Naive thymus-derived CD4-positive, alpha-beta T cell (primary cell): ENCODE measurements at regions of chr16 and their contacts with region 1.

Region 1: DNA sequence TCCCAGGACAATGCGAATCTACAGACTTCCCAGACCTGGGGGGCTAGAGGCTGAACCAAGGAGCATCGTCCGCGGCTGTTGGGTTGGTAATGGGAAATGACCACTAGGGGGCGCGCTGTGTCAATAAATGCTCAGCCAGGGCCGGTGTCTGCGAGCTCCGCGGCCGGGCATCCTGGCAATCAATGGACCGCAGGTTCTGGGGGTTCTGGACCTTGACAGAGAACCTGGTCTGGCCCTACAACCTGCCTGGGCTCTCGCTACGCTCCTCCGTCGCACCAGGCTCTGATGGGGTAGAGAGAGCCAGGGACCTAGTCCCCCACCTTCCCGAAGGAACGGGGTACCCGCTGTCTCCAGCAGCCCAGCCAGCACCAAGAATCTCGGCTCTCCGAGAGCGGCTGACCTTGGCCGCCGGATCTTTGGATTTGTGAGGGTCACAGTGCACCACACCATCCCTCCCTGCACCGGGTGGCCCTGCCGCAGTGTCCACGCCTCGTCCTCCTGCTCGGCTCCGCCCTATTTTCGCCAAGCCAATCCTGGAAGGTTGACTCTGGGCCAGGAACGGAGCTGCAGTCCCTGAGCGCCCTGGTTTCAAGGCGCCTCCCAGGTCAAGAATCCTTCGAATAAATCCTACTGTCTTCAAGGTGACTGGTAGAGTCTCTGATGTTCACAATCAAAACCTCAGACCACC is 20.4 kb upstream of the BEAN1 start:
- DNase-seq: peak; percentile 70 to 92 (median 84)
- ATAC-seq: peak; percentile 90
- H3K4me3 ChIP-seq: peak overlapping the region; percentile 76
- H3K4me3 Mint-ChIP-seq: peak overlapping the region; percentile 86 to 94 (median 89)
- H3K27ac ChIP-seq: no peak overlapping the region
- H3K27ac Mint-ChIP-seq: peak overlapping the region; percentile 34 to 97 (median 79)
- H3K4me1 ChIP-seq: peaks cover 19 to 27% of the 10 kb centered on the region in 2 donors
- H3K4me1 Mint-ChIP-seq: peaks cover 14 to 40% (median 33%) of the 10 kb centered on the region in 7 donors
- H3K27me3 ChIP-seq: no peaks in the 10 kb centered on the region
- H3K27me3 Mint-ChIP-seq: peaks cover 0 to 24% (median 5%) of the 10 kb centered on the region in 5 donors

Region 2: GRCh38 chr16:66212428-66212827 is 194.2 kb before region 1 on chr16:
- CTCF ChIA-PET with region 1: no interaction called
- POLR2A ChIA-PET with region 1: no interaction called
- intact Hi-C with region 1: no loop called
- DNase-seq: no peak
- ATAC-seq: no peak
- H3K4me3 ChIP-seq: no peak overlapping the region
- H3K4me3 Mint-ChIP-seq: no peak overlapping the region
- H3K27ac ChIP-seq: no peak overlapping the region
- H3K27ac Mint-ChIP-seq: no peak overlapping the region
- H3K4me1 ChIP-seq: no peaks in the 10 kb centered on the region
- H3K4me1 Mint-ChIP-seq: peaks cover 0 to 2% (median 0%) of the 10 kb centered on the region in 7 donors
- H3K27me3 ChIP-seq: no peaks in the 10 kb centered on the region
- H3K27me3 Mint-ChIP-seq: peaks cover 8 to 22% (median 18%) of the 10 kb centered on the region in 5 donors

Region 3: DNA sequence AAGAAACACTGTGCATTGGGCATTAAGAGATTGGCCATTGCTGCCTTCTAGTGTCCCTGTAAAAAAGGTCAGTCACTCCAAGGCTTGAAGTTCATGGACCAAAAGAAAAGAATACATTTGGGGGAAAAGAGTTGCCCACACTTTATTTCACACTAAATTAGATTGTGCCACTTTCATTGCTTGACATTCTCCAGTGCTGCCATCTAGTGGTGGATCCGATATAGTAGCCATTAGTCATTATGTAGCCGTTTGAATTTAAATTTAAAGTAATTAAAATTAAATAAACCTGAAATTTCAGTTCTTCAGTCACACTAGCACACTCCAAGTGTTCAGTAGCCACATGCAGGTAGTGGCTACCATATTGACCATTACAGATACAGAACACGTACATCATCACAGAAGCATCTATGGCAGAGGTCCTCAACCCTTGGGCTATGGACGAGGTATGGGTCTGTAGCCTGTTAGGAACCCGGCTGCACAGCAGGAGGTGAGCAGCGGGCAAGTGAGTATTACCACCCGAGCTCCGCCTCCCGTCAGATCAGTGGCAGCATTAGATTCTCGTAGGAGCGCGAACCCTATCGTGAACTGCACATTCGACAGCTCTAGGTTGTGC is 62.0 kb before region 1 on chr16:
- CTCF ChIA-PET with region 1: no interaction called
- POLR2A ChIA-PET with region 1: no interaction called
- intact Hi-C with region 1: no loop called
- DNase-seq: peak in 4 of 9 donors; percentile 20 to 40 (median 27)
- ATAC-seq: peak; percentile 36
- H3K4me3 ChIP-seq: no peak overlapping the region
- H3K4me3 Mint-ChIP-seq: no peak overlapping the region
- H3K27ac ChIP-seq: no peak overlapping the region
- H3K27ac Mint-ChIP-seq: no peak overlapping the region
- H3K4me1 ChIP-seq: no peaks in the 10 kb centered on the region
- H3K4me1 Mint-ChIP-seq: no peaks in the 10 kb centered on the region
- H3K27me3 ChIP-seq: no peaks in the 10 kb centered on the region
- H3K27me3 Mint-ChIP-seq: peaks cover 12 to 51% (median 29%) of the 10 kb centered on the region in 5 donors

Region 4: DNA sequence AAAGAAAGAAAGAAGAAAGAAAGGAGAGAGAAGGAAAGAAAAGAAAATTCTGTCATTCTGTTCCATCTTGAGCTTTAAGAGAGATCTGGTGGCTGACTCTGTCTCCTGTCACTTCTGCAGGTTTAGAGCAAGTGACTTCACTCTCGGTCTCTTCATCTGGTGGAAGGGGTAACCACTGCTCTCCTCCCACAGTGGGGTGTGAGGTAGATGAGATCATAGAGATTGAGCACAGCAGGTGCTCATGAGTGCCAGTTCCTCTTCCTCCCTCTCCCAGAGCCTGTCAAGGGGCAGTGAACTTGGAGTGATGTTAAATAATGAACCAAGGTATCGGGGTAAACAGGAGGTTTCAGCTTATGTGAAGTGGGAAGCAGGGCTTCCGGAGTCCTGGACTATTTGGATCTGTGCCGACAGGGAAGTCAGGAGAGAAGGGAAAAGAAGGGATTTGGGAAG is 68.1 kb after region 1 on chr16:
- CTCF ChIA-PET with region 1: interaction called, 84 read pairs
- POLR2A ChIA-PET with region 1: interaction called, 8 read pairs
- intact Hi-C with region 1: loop called (anchors 1 kb)
- DNase-seq: peak in 8 of 9 donors; percentile 49 to 76 (median 65)
- ATAC-seq: peak; percentile 85
- H3K4me3 ChIP-seq: no peak overlapping the region
- H3K4me3 Mint-ChIP-seq: peak overlapping the region in 9 of 10 donors; percentile 7 to 55 (median 36)
- H3K27ac ChIP-seq: peak overlapping the region; percentile 47
- H3K27ac Mint-ChIP-seq: peak overlapping the region; percentile 71 to 94 (median 86)
- H3K4me1 ChIP-seq: peaks cover 21 to 28% of the 10 kb centered on the region in 2 donors
- H3K4me1 Mint-ChIP-seq: peaks cover 13 to 35% (median 32%) of the 10 kb centered on the region in 7 donors
- H3K27me3 ChIP-seq: no peaks in the 10 kb centered on the region
- H3K27me3 Mint-ChIP-seq: peaks cover 0 to 5% (median 0%) of the 10 kb centered on the region in 5 donors

Region 5: DNA sequence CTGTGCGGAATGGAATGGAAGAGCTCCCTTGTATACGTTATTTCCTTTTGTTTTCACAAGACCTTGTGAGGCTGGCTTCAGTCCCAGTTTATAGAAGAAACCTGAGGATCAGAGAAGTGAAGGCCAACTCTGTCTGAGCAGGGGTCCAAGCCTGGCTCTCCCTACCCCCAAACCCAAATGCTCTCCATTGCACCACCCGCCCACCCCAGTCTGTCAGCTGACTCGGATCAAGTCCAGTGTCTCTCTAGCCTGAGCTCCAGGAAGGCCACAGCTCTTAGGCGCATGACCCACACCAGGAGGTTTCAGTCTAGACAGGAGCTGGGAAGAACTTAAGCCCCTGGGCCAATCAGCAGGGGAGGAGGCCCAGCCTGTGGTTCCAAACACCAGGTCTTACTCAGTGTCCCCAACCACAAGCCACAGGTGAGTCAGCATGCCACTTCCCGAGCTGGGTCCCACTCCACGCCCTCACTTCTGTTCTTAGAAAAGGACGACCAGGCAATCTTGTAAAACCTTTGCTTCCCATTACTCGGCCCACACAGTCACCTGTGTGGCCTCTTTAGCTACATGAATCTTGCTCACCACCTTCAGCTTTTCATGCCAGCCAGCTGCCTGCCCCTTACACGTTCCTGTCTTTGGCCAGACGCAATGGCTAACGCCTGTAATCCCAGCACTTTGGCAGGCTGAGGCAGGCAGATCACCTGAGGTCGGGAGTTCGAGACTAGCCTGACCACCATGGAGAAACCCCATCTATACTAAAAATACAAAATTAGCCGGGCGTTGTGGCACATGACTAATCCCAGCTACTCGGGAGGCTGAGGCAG is 115.5 kb after region 1 on chr16:
- CTCF ChIA-PET with region 1: no interaction called
- POLR2A ChIA-PET with region 1: interaction called, 3 read pairs
- intact Hi-C with region 1: loop called in 1 of 2 experiments (anchors 1 kb)
- DNase-seq: peak in 8 of 9 donors; percentile 26 to 92 (median 42)
- ATAC-seq: peak; percentile 65
- H3K4me3 ChIP-seq: peak overlapping the region; percentile 39
- H3K4me3 Mint-ChIP-seq: peak overlapping the region; percentile 71 to 85 (median 80)
- H3K27ac ChIP-seq: no peak overlapping the region
- H3K27ac Mint-ChIP-seq: peak overlapping the region; percentile 79 to 96 (median 91)
- H3K4me1 ChIP-seq: peaks cover 73 to 74% of the 10 kb centered on the region in 2 donors
- H3K4me1 Mint-ChIP-seq: peaks cover 69 to 97% (median 85%) of the 10 kb centered on the region in 7 donors
- H3K27me3 ChIP-seq: no peaks in the 10 kb centered on the region
- H3K27me3 Mint-ChIP-seq: peaks cover 0 to 4% (median 0%) of the 10 kb centered on the region in 5 donors

Region 6: GRCh38 chr16:66588981-66589713 is 182.5 kb after region 1 on chr16:
- CTCF ChIA-PET with region 1: interaction called, 28 read pairs
- POLR2A ChIA-PET with region 1: interaction called, 5 read pairs
- intact Hi-C with region 1: loop called (anchors 1 kb)
- DNase-seq: peak; percentile 36 to 73 (median 60)
- ATAC-seq: peak; percentile 98
- H3K4me3 ChIP-seq: no peak overlapping the region
- H3K4me3 Mint-ChIP-seq: peak overlapping the region; percentile 73 to 96 (median 87)
- H3K27ac ChIP-seq: no peak overlapping the region
- H3K27ac Mint-ChIP-seq: peak overlapping the region; percentile 75 to 90 (median 83)
- H3K4me1 ChIP-seq: peaks cover 6 to 7% of the 10 kb centered on the region in 2 donors
- H3K4me1 Mint-ChIP-seq: peaks cover 27 to 51% (median 39%) of the 10 kb centered on the region in 7 donors
- H3K27me3 ChIP-seq: no peaks in the 10 kb centered on the region
- H3K27me3 Mint-ChIP-seq: peaks cover 0 to 2% (median 0%) of the 10 kb centered on the region in 5 donors

Region 7: GRCh38 chr16:66696669-66697630 is 290.3 kb after region 1 on chr16 and contains the start of gene CMTM4:
- CTCF ChIA-PET with region 1: no interaction called
- POLR2A ChIA-PET with region 1: no interaction called
- intact Hi-C with region 1: loop called in 1 of 2 experiments (anchors 5 kb)
- DNase-seq: peak; percentile 56 to 85 (median 72)
- ATAC-seq: peak; percentile 98
- H3K4me3 ChIP-seq: peak within 1 kb of the TSS; percentile 69
- H3K4me3 Mint-ChIP-seq: peak within 1 kb of the TSS; percentile 77 to 91 (median 83)
- H3K27ac ChIP-seq: peak within 1 kb of the TSS; percentile 45
- H3K27ac Mint-ChIP-seq: peak within 1 kb of the TSS in 5 of 9 donors; percentile 36 to 81 (median 47)
- H3K4me1 ChIP-seq: peaks cover 5 to 10% of the 10 kb centered on the region in 2 donors
- H3K4me1 Mint-ChIP-seq: peaks cover 6 to 16% (median 12%) of the 10 kb centered on the region in 7 donors
- H3K27me3 ChIP-seq: no peaks in the 10 kb centered on the region
- H3K27me3 Mint-ChIP-seq: peaks cover 0 to 57% (median 7%) of the 10 kb centered on the region in 5 donors
- total RNA-seq, gene CMTM4: 1.5 to 2.5 (median 1.8) TPM

Region 8: DNA sequence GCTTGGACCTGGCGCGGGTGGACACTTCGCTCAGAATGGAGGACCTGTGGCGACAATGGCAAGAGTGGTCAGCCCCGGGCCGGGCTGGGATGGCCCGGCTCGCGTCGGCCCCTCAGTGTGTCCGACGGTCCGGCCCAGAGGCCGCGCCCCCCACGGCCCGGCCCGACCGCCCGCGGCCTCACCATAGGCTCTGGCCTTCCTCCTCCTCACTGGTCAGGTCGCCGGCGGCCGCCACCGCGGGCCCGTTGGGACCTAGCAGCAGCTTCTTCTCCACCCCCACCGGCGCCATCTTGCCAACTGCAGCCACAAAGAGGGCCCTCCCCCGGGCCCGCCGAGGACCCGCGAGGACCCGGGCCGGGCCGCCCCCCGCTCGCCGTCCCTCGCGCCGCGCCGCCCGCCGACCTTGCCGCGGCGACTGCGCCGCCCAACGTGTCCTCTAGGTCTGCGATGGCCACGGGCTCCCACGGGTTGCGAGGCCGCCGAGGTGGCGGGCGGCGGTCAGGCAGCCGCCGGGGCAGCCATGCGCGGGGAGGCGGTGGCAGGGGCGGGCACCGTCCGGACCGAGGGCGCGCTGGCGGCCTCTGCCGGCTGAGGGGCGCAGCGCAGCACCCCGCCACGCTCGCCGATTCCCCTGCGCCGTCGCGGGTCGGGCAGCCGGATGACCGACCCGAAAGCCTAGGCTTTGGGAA is 344.8 kb after region 1 on chr16 and contains the start of gene DYNC1LI2:
- CTCF ChIA-PET with region 1: interaction called, 7 read pairs
- POLR2A ChIA-PET with region 1: no interaction called
- intact Hi-C with region 1: loop called in 1 of 2 experiments (anchors 1 kb)
- DNase-seq: peak; percentile 76 to 95 (median 88)
- ATAC-seq: peak; percentile 98
- H3K4me3 ChIP-seq: peak within 1 kb of the TSS; percentile 78
- H3K4me3 Mint-ChIP-seq: peak within 1 kb of the TSS; percentile 76 to 95 (median 90)
- H3K27ac ChIP-seq: peak within 1 kb of the TSS; percentile 91
- H3K27ac Mint-ChIP-seq: peak within 1 kb of the TSS; percentile 73 to 96 (median 88)
- H3K4me1 ChIP-seq: peaks cover 21 to 24% of the 10 kb centered on the region in 2 donors
- H3K4me1 Mint-ChIP-seq: peaks cover 30 to 45% (median 42%) of the 10 kb centered on the region in 7 donors
- H3K27me3 ChIP-seq: no peaks in the 10 kb centered on the region
- H3K27me3 Mint-ChIP-seq: peaks cover 0 to 35% (median 0%) of the 10 kb centered on the region in 5 donors
- total RNA-seq, gene DYNC1LI2: 72.3 to 85.7 (median 80.9) TPM